HCT116 (cell line): ENCODE measurements at regions of chr16 and their contacts with region 1.

Region 1: GRCh38 chr16:1194665-1195392 is 30.2 kb downstream of the TPSG1 start:
- DNase-seq: no peak
- ATAC-seq: peak; percentile 48
- H3K4me3 ChIP-seq: peak overlapping the region; percentile 26 to 58
- H3K27ac ChIP-seq: peak overlapping the region; percentile 72; the same call in 1 of the 2 replicates
- H3K4me1 ChIP-seq: peaks cover 22 to 49% of the 10 kb centered on the region in 2 experiments
- H3K27me3 ChIP-seq: no peaks in the 10 kb centered on the region
- CTCF ChIP-seq: peak; percentile 74 to 86 (median 84); a peak in 5 of 6 replicates
- POLR2A ChIP-seq: no peak
- RAD21 ChIP-seq: peak; percentile 91

Region 2: DNA sequence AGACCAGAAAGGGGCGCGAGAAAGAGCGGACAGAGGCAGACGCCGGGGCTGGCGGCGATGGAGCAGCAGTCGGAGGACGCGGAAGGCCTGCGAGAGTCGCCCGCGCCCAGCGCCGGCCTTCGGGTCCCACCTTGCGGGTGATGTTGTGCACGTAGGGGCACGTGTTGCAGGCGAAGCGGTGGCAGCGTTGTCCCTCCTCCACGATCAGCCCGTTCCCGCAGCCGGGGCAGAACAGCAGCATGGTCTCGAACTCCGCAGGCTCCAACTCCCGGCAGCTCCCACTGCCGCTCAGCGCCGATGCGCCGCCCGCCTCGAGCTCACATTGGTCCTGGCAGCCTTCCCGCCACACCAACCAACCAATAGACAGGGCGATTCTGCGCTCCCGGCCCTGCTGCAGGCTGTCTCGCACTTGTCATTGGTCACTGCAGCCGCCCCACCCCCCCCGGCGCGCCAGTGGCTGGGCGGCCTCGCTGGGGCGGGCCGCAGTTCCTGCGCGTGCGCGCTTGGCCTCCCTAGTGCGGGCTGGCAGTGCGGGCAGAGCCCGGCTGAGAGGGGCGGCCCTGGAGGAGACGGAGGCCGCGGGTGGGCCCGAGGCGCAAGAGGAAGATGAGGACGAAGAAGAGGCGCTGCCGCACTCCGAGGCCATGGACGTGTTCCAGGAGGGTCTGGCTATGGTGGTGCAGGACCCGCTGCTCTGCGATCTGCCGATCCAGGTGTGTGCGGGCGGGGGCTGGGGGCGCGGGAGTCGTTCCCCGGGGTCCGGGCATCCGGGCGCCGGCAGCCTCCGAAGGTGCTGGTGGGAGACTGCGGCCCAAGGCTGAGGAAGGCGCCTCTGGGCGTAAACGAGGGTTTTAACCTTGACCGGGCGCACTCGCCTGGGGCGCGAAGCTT is 1141.2 kb before region 1 on chr16 and contains the starts of genes POLR3K and SNRNP25:
- CTCF ChIA-PET with region 1: no interaction called
- POLR2A ChIA-PET with region 1: no interaction called
- RAD21 ChIA-PET with region 1: no interaction called
- intact Hi-C with region 1: no loop called
- DNase-seq: peak; percentile 73
- ATAC-seq: peak; percentile 94
- H3K4me3 ChIP-seq: peak within 1 kb of the TSS; percentile 73
- H3K27ac ChIP-seq: peak within 1 kb of the TSS; percentile 84
- H3K4me1 ChIP-seq: no peaks in the 10 kb centered on the region
- H3K27me3 ChIP-seq: no peaks in the 10 kb centered on the region
- CTCF ChIP-seq: no peak
- POLR2A ChIP-seq: peak; percentile 59
- RAD21 ChIP-seq: no peak
- total RNA-seq, gene POLR3K: 22.7 TPM
- total RNA-seq, gene SNRNP25: 24.5 TPM

Region 3: DNA sequence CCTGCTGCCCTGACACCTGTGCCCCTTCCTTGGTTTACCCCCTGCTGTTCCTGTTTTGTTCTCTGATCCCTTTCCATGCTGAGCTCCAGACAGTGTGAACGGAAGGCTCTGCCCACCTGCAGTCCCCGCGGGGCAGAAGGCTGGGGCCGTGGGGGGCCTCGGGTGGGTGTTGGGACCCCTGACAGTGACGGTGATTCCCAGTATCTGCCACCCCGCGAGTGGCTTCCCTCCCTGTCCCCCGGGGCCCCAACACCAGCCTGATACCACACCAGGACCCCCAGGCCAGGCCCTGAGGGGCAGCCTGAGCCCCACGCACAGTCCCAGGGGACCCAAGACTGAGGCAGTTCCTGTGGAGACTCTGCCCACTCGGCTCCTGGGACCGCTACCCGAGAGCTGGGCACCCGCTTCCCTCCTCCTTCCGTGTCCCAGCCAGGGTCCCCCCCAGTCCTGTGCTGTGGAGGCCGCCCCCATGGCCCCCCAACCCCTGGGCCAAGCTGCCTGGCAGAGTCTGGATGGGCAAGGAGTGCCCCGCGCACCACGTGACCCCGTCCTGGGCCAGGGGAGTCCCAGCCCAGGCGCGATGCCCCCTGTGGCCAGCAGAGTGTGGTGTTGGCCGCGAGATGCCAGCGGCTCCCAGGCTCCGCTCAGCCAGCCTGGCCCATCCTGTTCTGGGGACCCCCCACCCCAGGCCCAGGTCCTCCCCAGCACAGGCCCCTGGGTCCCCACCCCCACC is 88.8 kb before region 1 on chr16:
- CTCF ChIA-PET with region 1: interaction called, 5 read pairs
- POLR2A ChIA-PET with region 1: no interaction called
- RAD21 ChIA-PET with region 1: interaction called in 1 of 2 experiments, 4 read pairs
- intact Hi-C with region 1: loop called (anchors 1 kb)
- DNase-seq: no peak
- ATAC-seq: peak; percentile 84
- H3K4me3 ChIP-seq: no peak overlapping the region
- H3K27ac ChIP-seq: no peak overlapping the region
- H3K4me1 ChIP-seq: peaks cover 0 to 20% of the 10 kb centered on the region in 2 experiments; a peak in 2 of 4 replicates
- H3K27me3 ChIP-seq: no peaks in the 10 kb centered on the region
- CTCF ChIP-seq: peak; percentile 77 to 88 (median 85)
- POLR2A ChIP-seq: no peak
- RAD21 ChIP-seq: peak; percentile 94

Region 4: DNA sequence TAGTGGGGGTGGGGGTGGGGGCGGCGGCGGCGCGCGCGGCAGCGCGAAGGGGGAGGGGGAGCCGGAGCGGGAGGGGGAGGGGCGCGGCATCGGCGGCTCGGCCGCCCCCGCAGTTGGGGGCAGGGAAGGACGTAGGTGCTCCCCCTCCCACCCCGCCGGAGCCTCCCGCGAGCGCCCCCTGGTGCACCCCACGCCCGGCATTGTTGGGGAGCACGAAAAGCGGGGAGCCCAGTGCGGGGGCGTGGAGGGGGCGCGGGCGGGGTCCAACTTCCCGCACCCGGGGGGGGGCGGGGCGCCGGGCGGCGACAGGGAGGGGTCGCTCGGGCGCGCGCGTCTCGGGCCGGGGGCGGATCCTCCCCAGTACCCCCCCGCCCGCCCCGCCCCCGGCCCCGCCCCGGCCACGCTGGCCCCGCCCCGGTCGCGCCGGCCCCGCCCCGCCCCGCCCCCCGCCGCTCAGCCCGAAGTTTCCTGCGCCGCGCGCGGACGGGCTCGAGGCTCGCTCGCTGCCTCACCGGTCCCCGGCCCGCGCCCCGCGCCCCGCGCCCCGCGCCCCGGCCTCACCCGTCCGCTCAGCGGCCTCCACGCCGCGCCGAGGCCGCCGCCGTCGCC is 42.1 kb before region 1 on chr16 and contains the start of gene CACNA1H:
- CTCF ChIA-PET with region 1: interaction called, 3 read pairs
- POLR2A ChIA-PET with region 1: no interaction called
- RAD21 ChIA-PET with region 1: no interaction called
- intact Hi-C with region 1: loop called (anchors 5 kb)
- DNase-seq: no peak
- ATAC-seq: peak; percentile 55
- H3K4me3 ChIP-seq: peak within 1 kb of the TSS; percentile 23 to 38
- H3K27ac ChIP-seq: peak within 1 kb of the TSS; percentile 51; the same call in 1 of the 2 replicates
- H3K4me1 ChIP-seq: peaks cover 25 to 28% of the 10 kb centered on the region in 2 experiments
- H3K27me3 ChIP-seq: no peaks in the 10 kb centered on the region
- CTCF ChIP-seq: peak in 1 of 3 experiments; percentile 40; a peak in 3 of 6 replicates
- POLR2A ChIP-seq: no peak
- RAD21 ChIP-seq: no peak
- total RNA-seq, gene CACNA1H: 24.3 TPM